ENCODE measurements at regions of chr5 and their contacts with region 1.

Region 1: GRCh38 chr5:143403593-143404415 is at the start of gene NR3C1:
- DNase-seq: peak; percentile 88 to 91
- ATAC-seq: peak; percentile 68 to 91 (median 78)
- H3K4me3 ChIP-seq: peak within 1 kb of the TSS; percentile 65 to 97 (median 88)
- H3K27ac ChIP-seq: peak within 1 kb of the TSS; percentile 96 to 100 (median 99)
- H3K4me1 ChIP-seq: peaks cover 0 to 39% (median 18%) of the 10 kb centered on the region in 9 donors
- H3K27me3 ChIP-seq: no peaks in the 10 kb centered on the region
- CTCF ChIP-seq: peak; percentile 50 to 86 (median 63)
- total RNA-seq, gene NR3C1: 31.1 to 62.3 (median 47.6) TPM

Region 2: DNA sequence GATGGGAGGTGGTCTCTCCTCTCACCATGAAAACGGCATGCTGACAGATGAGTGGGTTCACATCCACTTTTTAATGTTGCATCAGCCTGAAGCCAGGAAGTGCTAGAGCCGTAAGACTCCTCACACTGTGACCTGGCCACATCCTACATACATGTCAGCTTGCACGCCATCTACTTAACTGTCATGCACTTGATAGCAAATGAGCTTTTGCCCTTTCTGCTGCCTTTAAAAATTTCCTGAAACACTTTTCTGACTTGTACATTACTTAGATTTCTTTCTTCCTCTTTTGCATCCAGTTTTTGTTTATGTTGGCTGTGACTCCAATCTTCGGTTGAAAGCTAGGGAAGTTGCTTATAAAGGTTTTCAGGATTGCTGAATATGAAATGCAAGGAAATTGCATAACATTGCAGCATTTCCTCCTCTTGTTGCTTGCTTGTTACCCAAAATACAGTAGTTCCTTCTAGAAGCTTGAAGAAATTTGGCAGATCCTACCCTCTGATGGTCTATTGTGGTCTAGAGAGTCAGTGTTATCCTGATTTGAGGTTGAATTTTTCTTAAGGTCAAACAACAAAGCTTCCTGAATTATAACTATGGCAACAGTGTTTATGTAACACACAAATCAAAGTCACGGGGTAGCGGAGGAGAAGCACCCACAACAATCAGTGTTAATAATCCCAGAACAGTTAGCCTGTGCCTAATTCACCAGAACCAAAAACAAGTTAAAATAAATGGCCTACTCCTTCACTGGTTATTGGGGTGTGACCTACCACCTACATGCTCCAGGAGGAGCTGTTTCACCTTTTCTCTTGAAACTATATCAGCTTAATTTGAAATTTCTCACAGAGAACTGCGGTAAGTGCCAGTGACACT is 401.1 kb before region 1 on chr5:
- intact Hi-C with region 1: loop called in 5 of 10 experiments (anchors 5 kb)
- DNase-seq: peak in 1 of 2 donors; percentile 51
- ATAC-seq: peak; percentile 79 to 92 (median 84)
- H3K4me3 ChIP-seq: peak overlapping the region in 2 of 10 donors; percentile 11 to 12
- H3K27ac ChIP-seq: peak overlapping the region in 9 of 10 donors; percentile 23 to 90 (median 73)
- H3K4me1 ChIP-seq: peaks cover 10 to 82% (median 59%) of the 10 kb centered on the region in 9 donors
- H3K27me3 ChIP-seq: no peaks in the 10 kb centered on the region
- CTCF ChIP-seq: peak; percentile 8 to 71 (median 55)

Region 3: GRCh38 chr5:143023411-143024096 is 380.2 kb before region 1 on chr5:
- intact Hi-C with region 1: loop called in 3 of 10 experiments (anchors 5 to 10 kb)
- DNase-seq: peak; percentile 66 to 74
- ATAC-seq: peak; percentile 86 to 97 (median 92)
- H3K4me3 ChIP-seq: no peak overlapping the region
- H3K27ac ChIP-seq: peak overlapping the region in 9 of 10 donors; percentile 28 to 80 (median 74)
- H3K4me1 ChIP-seq: peaks cover 10 to 55% (median 37%) of the 10 kb centered on the region in 9 donors
- H3K27me3 ChIP-seq: no peaks in the 10 kb centered on the region
- CTCF ChIP-seq: peak in 4 of 9 donors; percentile 5 to 36 (median 20)

Region 4: DNA sequence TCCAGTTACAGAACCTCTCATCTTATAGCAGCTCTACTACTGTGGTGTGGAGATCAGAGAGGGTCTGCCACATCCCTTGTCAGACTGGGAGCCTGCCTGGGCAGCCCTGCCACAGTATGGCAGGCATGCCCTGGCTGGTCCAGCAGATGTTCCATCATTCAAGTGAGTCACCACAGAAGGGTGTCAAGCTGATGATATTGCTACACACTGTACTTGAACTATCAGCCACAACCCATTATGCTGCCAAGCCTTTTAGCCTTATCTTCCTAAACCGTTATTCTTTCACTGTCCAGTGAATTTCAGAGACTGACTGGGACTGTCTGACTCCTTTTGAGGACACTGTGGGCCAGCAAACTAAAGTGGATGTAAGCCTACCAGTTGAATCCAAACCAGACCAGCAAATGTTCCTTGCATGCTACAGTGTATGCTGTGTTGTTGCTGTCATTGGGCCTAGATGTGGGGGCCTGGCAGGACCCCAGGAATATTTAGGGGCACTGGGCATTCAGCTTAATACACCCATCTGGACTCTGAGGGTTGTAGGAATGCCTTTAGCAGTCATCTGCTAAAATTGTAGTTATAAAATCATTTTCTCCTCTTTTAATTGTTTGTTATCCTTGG is 202.9 kb before region 1 on chr5:
- intact Hi-C with region 1: loop called in 5 of 10 experiments (anchors 5 to 10 kb)
- DNase-seq: peak; percentile 40 to 59
- ATAC-seq: peak; percentile 89 to 99 (median 96)
- H3K4me3 ChIP-seq: no peak overlapping the region
- H3K27ac ChIP-seq: peak overlapping the region in 4 of 10 donors; percentile 28 to 64 (median 50)
- H3K4me1 ChIP-seq: peaks cover 5 to 71% (median 51%) of the 10 kb centered on the region in 9 donors
- H3K27me3 ChIP-seq: no peaks in the 10 kb centered on the region
- CTCF ChIP-seq: no peak

Region 5: DNA sequence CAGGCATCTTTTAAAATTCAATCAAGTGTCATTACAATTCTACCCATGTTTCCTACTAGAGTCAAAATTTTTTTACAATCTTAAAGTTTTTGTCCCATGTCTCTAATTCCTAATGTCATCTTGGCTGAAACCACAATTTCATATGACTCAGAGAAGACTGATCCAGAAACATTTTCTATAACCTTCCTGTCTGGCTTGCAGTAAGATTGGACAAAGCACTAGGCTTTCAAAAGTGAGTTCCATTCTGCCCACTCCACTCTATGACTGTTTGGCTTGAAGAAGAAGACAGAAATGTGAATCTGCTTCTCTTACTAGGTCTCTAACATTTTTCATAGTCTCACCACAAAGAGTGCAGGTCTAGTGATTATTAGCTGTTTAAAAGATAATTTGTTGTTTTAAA is 89.1 kb before region 1 on chr5:
- intact Hi-C with region 1: loop called in 5 of 10 experiments (anchors 5 to 10 kb)
- DNase-seq: no peak
- ATAC-seq: peak in 4 of 8 donors; percentile 24 to 74 (median 52)
- H3K4me3 ChIP-seq: no peak overlapping the region
- H3K27ac ChIP-seq: peak overlapping the region in 2 of 10 donors; percentile 2 to 42
- H3K4me1 ChIP-seq: peaks cover 11 to 90% (median 69%) of the 10 kb centered on the region in 9 donors
- H3K27me3 ChIP-seq: no peaks in the 10 kb centered on the region
- CTCF ChIP-seq: no peak

Region 6: GRCh38 chr5:143824851-143825720 is 421.3 kb after region 1 on chr5:
- intact Hi-C with region 1: loop called in 8 of 10 experiments (anchors 2 to 10 kb)
- DNase-seq: peak; percentile 76 to 88
- ATAC-seq: peak; percentile 94 to 98 (median 96)
- H3K4me3 ChIP-seq: no peak overlapping the region
- H3K27ac ChIP-seq: no peak overlapping the region
- H3K4me1 ChIP-seq: peaks cover 0 to 13% (median 6%) of the 10 kb centered on the region in 9 donors
- H3K27me3 ChIP-seq: no peaks in the 10 kb centered on the region
- CTCF ChIP-seq: peak; percentile 92 to 99 (median 96)